ENCODE measurements at regions of chr17 and their contacts with region 1.

Region 1: DNA sequence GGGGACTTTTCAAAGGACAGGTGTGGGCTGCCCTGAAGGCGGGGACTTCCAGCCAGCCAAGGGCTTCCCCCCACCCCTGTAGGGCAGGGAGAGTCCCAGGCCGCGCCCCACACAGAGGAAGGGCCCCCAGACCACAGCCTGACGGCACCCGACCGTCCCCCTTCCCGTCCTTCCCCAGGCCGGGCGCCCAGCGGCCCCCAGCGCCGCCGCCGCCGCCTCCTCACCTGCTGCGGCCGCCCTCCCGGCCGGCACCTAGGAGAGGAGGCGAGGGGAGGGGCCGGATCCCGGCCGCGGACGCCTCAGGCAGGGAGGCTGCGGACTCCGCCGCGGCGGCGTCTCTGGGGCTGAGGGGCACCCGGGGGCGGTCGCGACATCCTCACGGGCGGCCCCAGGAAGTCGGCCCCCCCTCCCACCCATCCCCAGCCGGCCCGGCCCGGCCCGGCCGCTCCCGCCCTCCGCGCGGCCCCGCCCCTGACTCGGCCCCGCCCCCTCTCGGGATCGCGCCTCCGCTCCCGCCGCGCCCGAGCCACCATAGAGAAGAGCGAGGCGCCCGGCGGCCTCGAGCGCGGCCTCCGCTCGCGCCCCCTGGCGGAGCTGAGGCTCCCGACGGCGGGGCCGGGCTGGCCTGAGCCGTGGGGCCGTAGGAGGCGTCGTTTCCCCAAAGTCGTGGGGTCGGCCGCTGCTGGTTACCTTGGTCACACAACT is 25.5 kb upstream of the RFFL start:
- DNase-seq: peak; percentile 92
- ATAC-seq: peak; percentile 81
- H3K4me3 Mint-ChIP-seq: peak overlapping the region; percentile 91
- H3K27ac Mint-ChIP-seq: peak overlapping the region; percentile 92
- H3K4me1 Mint-ChIP-seq: peaks cover 33% of the 10 kb centered on the region
- H3K27me3 Mint-ChIP-seq: no peaks in the 10 kb centered on the region
- CTCF ChIP-seq: peak; percentile 40

Region 2: DNA sequence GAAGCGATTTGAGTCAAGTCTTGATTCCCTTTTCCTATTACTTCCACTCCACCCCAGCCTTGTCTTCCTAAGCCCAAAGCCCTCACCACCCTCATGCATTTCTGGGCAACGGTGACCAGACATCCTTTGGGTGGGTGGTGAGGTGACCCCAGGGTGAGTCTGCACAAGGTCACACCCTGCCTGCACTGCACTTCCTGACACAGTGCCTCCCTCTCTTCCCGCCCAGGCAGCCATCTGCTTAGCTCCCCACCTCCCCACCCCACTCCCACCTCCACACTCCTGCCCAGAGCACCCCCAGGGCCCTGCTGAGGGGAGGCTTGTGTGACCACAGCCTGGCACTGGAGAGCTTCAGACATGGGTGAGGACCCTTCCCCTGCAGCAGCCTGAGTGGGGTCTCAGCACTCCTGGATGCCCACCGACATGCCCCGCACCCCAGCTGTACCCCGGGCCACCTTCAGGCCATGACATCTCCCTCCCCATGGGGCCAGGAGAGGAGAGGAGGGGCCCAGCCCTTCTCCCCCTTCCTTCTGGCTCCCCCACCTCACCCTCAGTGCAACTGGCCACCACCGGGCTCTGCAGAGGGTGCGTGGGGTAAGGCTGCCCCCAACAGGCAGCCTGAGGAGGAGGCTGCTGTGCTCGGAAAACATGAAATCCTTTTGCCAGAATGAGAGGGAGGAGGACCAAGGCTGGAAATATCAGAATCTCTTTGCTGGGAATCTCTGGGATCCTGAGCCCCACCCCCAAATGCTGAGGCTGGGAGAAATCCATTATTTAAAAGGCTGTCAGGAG is 196.4 kb before region 1 on chr17:
- CTCF ChIA-PET with region 1: no interaction called
- POLR2A ChIA-PET with region 1: no interaction called
- intact Hi-C with region 1: no loop called
- DNase-seq: no peak
- ATAC-seq: no peak
- H3K4me3 Mint-ChIP-seq: no peak overlapping the region
- H3K27ac Mint-ChIP-seq: no peak overlapping the region
- H3K4me1 Mint-ChIP-seq: no peaks in the 10 kb centered on the region
- H3K27me3 Mint-ChIP-seq: peaks cover 36% of the 10 kb centered on the region
- CTCF ChIP-seq: no peak

Region 3: GRCh38 chr17:34980681-34981537 is 108.1 kb before region 1 on chr17:
- CTCF ChIA-PET with region 1: interaction called, 7 read pairs
- POLR2A ChIA-PET with region 1: interaction called, 22 read pairs
- intact Hi-C with region 1: loop called (anchors 1 kb)
- DNase-seq: peak; percentile 92
- ATAC-seq: peak; percentile 91
- H3K4me3 Mint-ChIP-seq: peak overlapping the region; percentile 88
- H3K27ac Mint-ChIP-seq: peak overlapping the region; percentile 87
- H3K4me1 Mint-ChIP-seq: peaks cover 32% of the 10 kb centered on the region
- H3K27me3 Mint-ChIP-seq: no peaks in the 10 kb centered on the region
- CTCF ChIP-seq: no peak

Region 4: GRCh38 chr17:35022536-35023063 is 66.4 kb before region 1 on chr17:
- CTCF ChIA-PET with region 1: interaction called, 4 read pairs
- POLR2A ChIA-PET with region 1: interaction called, 8 read pairs
- intact Hi-C with region 1: loop called (anchors 1 kb)
- DNase-seq: peak; percentile 25
- ATAC-seq: peak; percentile 99
- H3K4me3 Mint-ChIP-seq: no peak overlapping the region
- H3K27ac Mint-ChIP-seq: peak overlapping the region; percentile 61
- H3K4me1 Mint-ChIP-seq: peaks cover 12% of the 10 kb centered on the region
- H3K27me3 Mint-ChIP-seq: no peaks in the 10 kb centered on the region
- CTCF ChIP-seq: no peak

Region 5: GRCh38 chr17:35063514-35064223 is 25.4 kb before region 1 on chr17 and contains the start of gene RFFL:
- CTCF ChIA-PET with region 1: interaction called, 24 read pairs
- POLR2A ChIA-PET with region 1: interaction called, 17 read pairs
- intact Hi-C with region 1: loop called (anchors 1 kb)
- DNase-seq: peak; percentile 54
- ATAC-seq: peak; percentile 96
- H3K4me3 Mint-ChIP-seq: peak within 1 kb of the TSS; percentile 79
- H3K27ac Mint-ChIP-seq: peak within 1 kb of the TSS; percentile 92
- H3K4me1 Mint-ChIP-seq: peaks cover 32% of the 10 kb centered on the region
- H3K27me3 Mint-ChIP-seq: no peaks in the 10 kb centered on the region
- CTCF ChIP-seq: no peak
- total RNA-seq, gene RFFL: 31.5 and 34.1 TPM in 2 replicates

Region 6: GRCh38 chr17:35141681-35142466 is 52.8 kb after region 1 on chr17 and contains the start of gene NLE1:
- CTCF ChIA-PET with region 1: no interaction called
- POLR2A ChIA-PET with region 1: no interaction called
- intact Hi-C with region 1: loop called (anchors 1 kb)
- DNase-seq: peak; percentile 87
- ATAC-seq: peak; percentile 99
- H3K4me3 Mint-ChIP-seq: peak within 1 kb of the TSS; percentile 87
- H3K27ac Mint-ChIP-seq: peak within 1 kb of the TSS; percentile 59
- H3K4me1 Mint-ChIP-seq: peaks cover 14% of the 10 kb centered on the region
- H3K27me3 Mint-ChIP-seq: peaks cover 1% of the 10 kb centered on the region
- CTCF ChIP-seq: no peak
- total RNA-seq, gene NLE1: 22.1 and 26.3 TPM in 2 replicates

Measured in activated B cell treated with CpG ODN at 0.5 μM for 24 hours (primary cell).